ENCODE measurements at regions of chr17 and their contacts with region 1.

Region 1: GRCh38 chr17:17356149-17356930 is 53.2 kb downstream of the NT5M start:
- DNase-seq: peak; percentile 78
- ATAC-seq: peak; percentile 79
- H3K4me3 Mint-ChIP-seq: no peak overlapping the region
- H3K27ac Mint-ChIP-seq: no peak overlapping the region
- H3K4me1 Mint-ChIP-seq: peaks cover 8% of the 10 kb centered on the region
- H3K27me3 Mint-ChIP-seq: peaks cover 16% of the 10 kb centered on the region

Region 2: DNA sequence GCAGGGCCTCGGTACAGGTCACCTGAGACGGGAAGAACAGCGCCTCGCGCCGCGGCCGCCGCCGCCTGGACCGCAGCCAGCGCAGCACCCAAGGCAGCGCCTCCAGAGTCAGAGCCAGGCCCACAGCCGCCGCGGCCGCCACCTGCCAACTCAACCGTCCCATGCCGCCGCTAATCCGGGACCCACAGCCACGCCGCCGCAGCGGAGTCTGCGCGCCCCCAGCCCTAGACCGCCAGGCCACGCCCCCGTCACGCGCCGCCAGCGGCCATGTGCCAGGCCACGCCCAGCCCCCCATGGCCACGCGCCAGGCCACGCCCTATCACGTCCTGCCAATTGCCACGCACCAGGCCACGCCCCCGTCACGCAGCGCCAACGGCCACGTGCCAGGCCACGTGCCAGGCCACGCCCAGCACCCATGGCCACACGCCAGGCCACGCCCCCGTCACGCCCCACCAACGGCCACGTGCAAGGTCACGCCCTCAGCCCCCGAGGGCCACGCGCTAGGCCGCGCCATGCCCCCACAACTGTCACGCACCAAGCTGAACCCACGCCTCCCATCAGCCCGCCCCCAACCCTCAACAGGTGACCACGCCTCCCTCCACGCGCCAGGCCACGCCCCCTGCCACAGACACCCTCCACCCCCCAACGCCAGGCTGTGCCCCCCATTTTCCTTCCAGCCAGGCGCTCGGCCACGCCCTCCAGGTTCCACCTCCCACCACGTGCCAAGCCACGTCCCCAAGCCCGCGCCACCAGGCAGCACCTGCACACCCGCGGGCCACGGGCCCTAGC is 150.0 kb before region 1 on chr17 and contains the start of gene PLD6:
- CTCF ChIA-PET with region 1: no interaction called
- POLR2A ChIA-PET with region 1: no interaction called
- DNase-seq: peak; percentile 90
- ATAC-seq: peak; percentile 73
- H3K4me3 Mint-ChIP-seq: peak within 1 kb of the TSS; percentile 89
- H3K27ac Mint-ChIP-seq: peak within 1 kb of the TSS; percentile 92
- H3K4me1 Mint-ChIP-seq: peaks cover 33% of the 10 kb centered on the region
- H3K27me3 Mint-ChIP-seq: no peaks in the 10 kb centered on the region
- total RNA-seq, gene PLD6: 3.8 to 4.2 TPM

Region 3: DNA sequence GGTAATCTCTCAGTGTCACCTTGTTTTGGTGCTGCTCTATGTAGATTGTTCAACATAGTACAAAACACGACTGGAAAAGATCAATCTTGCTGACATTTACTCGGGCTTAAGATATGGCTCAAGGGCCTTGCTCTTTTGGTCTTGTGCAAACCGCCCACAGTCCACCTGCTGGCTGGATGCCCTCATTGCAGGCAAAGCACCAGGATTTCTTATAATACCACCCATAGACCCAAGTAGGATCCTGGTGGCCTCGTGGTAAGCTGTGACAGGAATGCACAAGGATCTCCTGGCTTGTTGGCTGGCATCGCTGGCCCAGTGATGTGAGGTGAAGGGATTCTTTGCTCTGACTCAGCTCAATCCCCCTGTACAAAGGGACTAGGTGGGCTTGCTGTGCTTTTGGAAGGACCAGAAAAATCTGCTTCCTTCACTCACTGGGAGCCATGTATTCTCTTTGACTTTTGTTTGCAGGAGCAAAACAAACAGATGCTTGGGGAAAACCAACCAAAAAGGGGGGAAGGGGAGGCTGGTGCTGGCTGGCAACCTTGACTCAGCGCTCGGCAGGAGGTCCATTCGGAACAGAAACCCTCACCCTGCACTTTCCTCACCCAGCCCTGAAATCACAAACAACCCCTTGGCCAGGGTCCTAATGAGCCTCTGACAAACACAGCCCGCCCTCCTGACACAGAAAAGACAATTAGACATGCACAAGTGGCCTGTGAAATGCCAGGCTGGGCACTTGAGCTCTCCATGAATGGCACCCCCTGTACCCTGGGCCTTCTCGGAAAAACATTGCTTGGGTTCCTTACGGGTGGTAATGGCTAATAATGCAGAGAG is 83.9 kb after region 1 on chr17:
- CTCF ChIA-PET with region 1: interaction called, 17 read pairs
- POLR2A ChIA-PET with region 1: no interaction called
- DNase-seq: peak; percentile 83
- ATAC-seq: peak; percentile 81
- H3K4me3 Mint-ChIP-seq: no peak overlapping the region
- H3K27ac Mint-ChIP-seq: no peak overlapping the region
- H3K4me1 Mint-ChIP-seq: peaks cover 8% of the 10 kb centered on the region
- H3K27me3 Mint-ChIP-seq: peaks cover 2% of the 10 kb centered on the region

Region 4: DNA sequence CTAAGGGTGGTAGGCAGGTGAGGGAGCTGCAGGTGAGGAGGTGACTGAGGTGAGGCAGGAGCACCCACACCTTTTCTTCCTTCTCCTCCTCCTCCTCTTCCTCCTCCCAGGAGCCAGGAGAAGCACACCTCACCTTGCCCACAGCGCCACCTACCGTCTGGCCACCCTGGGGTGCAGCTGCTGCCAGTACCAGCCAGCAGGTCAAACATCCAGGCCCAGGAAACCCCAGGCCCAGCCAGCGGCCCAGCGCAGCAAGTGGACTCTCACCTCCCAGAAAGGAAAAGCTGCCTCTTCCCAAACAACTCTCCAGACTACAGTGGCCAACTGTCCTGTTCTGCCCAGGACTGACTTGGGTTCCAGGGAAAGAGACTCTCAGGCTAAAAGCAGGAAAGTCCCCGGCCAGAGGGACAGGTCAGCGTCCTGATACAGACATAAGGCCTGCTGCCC is 212.4 kb after region 1 on chr17:
- CTCF ChIA-PET with region 1: interaction called, 21 read pairs
- POLR2A ChIA-PET with region 1: interaction called, 3 read pairs
- DNase-seq: peak; percentile 73
- ATAC-seq: peak; percentile 57
- H3K4me3 Mint-ChIP-seq: no peak overlapping the region
- H3K27ac Mint-ChIP-seq: no peak overlapping the region
- H3K4me1 Mint-ChIP-seq: no peaks in the 10 kb centered on the region
- H3K27me3 Mint-ChIP-seq: no peaks in the 10 kb centered on the region

Region 5: DNA sequence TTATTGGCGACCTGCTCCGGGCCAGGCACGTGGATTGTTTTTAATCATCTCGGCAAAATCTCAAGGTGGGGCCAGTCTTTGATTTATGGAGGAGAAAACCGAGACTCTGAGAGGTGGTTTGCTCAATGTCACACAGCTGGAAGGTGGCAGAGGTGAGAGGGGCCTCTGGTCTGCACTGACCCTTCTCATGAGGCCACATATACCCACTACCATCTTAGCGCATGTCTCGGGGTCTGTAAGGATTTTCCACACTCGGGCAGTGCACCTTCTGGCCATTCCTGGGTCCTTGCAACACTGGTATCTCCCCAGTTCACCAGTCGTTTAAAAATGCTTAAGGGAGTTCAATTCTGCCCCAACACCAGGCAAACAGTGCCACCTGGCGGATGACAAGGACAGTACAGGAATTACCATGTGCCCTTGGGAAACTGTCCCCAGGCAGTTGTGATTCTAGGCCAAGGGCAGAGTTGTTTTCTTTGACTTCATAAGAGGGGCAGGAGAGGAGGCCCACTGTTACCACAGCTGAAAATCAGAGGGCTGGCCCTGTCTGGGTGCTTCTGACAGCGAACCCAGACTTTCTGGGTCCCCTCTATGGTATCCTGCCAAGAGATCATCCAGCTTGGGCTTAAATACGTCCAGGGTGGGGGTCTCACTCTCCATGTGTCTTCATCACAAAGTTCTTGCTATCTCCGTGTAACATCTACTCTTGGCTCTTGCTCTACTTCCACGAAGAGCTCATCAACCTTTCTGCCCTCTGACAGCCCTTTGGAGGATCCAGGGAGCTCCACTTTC is 285.5 kb after region 1 on chr17:
- CTCF ChIA-PET with region 1: interaction called, 61 read pairs
- POLR2A ChIA-PET with region 1: interaction called, 6 read pairs
- DNase-seq: peak; percentile 84
- ATAC-seq: peak; percentile 88
- H3K4me3 Mint-ChIP-seq: no peak overlapping the region
- H3K27ac Mint-ChIP-seq: no peak overlapping the region
- H3K4me1 Mint-ChIP-seq: no peaks in the 10 kb centered on the region
- H3K27me3 Mint-ChIP-seq: peaks cover under 1% of the 10 kb centered on the region

Measured in activated CD8-positive, alpha-beta T cell treated with anti-CD3 and anti-CD28 coated beads, Interleukin-2, amount 10 ng/mL, durations not matched to agents 7 days and 5 days (primary cell).